ENCODE measurements at regions of chr16 and their contacts with region 1.

Region 1: GRCh38 chr16:11742539-11743307 is at the start of gene TXNDC11:
- DNase-seq: peak; percentile 98 to 100 (median 100)
- ATAC-seq: peak; percentile 98
- H3K4me3 ChIP-seq: peak within 1 kb of the TSS; percentile 92
- H3K4me3 Mint-ChIP-seq: peak within 1 kb of the TSS; percentile 91 to 98 (median 94)
- H3K27ac ChIP-seq: peak within 1 kb of the TSS; percentile 90
- H3K27ac Mint-ChIP-seq: peak within 1 kb of the TSS; percentile 91 to 99 (median 98)
- H3K4me1 ChIP-seq: peaks cover 26 to 28% of the 10 kb centered on the region in 2 donors
- H3K4me1 Mint-ChIP-seq: peaks cover 39 to 55% (median 51%) of the 10 kb centered on the region in 7 donors
- H3K27me3 ChIP-seq: no peaks in the 10 kb centered on the region
- H3K27me3 Mint-ChIP-seq: no peaks in the 10 kb centered on the region
- total RNA-seq, gene TXNDC11: 41.2 to 80.5 (median 55.1) TPM

Region 2: GRCh38 chr16:11560701-11561449 is 181.8 kb before region 1 on chr16:
- CTCF ChIA-PET with region 1: no interaction called
- POLR2A ChIA-PET with region 1: interaction called, 3 read pairs
- intact Hi-C with region 1: loop called in 1 of 2 experiments (anchors 1 kb)
- DNase-seq: peak; percentile 41 to 92 (median 89)
- ATAC-seq: peak; percentile 92
- H3K4me3 ChIP-seq: peak overlapping the region; percentile 56
- H3K4me3 Mint-ChIP-seq: peak overlapping the region; percentile 79 to 97 (median 84)
- H3K27ac ChIP-seq: peak overlapping the region; percentile 89
- H3K27ac Mint-ChIP-seq: peak overlapping the region; percentile 92 to 99 (median 99)
- H3K4me1 ChIP-seq: peaks cover 70 to 85% of the 10 kb centered on the region in 2 donors
- H3K4me1 Mint-ChIP-seq: peaks cover 43 to 92% (median 78%) of the 10 kb centered on the region in 7 donors
- H3K27me3 ChIP-seq: no peaks in the 10 kb centered on the region
- H3K27me3 Mint-ChIP-seq: peaks cover 0 to 2% (median 0%) of the 10 kb centered on the region in 5 donors

Region 3: GRCh38 chr16:11783319-11784037 is 40.8 kb after region 1 on chr16:
- CTCF ChIA-PET with region 1: interaction called, 3 read pairs
- POLR2A ChIA-PET with region 1: interaction called, 40 read pairs
- intact Hi-C with region 1: loop called (anchors 1 kb)
- DNase-seq: peak; percentile 31 to 89 (median 82)
- ATAC-seq: peak; percentile 90
- H3K4me3 ChIP-seq: peak overlapping the region; percentile 52
- H3K4me3 Mint-ChIP-seq: peak overlapping the region; percentile 79 to 92 (median 85)
- H3K27ac ChIP-seq: peak overlapping the region; percentile 96
- H3K27ac Mint-ChIP-seq: peak overlapping the region; percentile 95 to 99 (median 99)
- H3K4me1 ChIP-seq: peaks cover 33 to 49% of the 10 kb centered on the region in 2 donors
- H3K4me1 Mint-ChIP-seq: peaks cover 41 to 68% (median 62%) of the 10 kb centered on the region in 7 donors
- H3K27me3 ChIP-seq: no peaks in the 10 kb centered on the region
- H3K27me3 Mint-ChIP-seq: no peaks in the 10 kb centered on the region

Region 4: GRCh38 chr16:11851294-11852091 is 108.8 kb after region 1 on chr16 and contains the start of gene RSL1D1:
- CTCF ChIA-PET with region 1: no interaction called
- POLR2A ChIA-PET with region 1: interaction called, 6 read pairs
- intact Hi-C with region 1: loop called (anchors 1 kb)
- DNase-seq: peak; percentile 90 to 99 (median 96)
- ATAC-seq: peak; percentile 92
- H3K4me3 ChIP-seq: peak within 1 kb of the TSS; percentile 95
- H3K4me3 Mint-ChIP-seq: peak within 1 kb of the TSS; percentile 94 to 99 (median 99)
- H3K27ac ChIP-seq: peak within 1 kb of the TSS; percentile 89
- H3K27ac Mint-ChIP-seq: peak within 1 kb of the TSS; percentile 91 to 98 (median 97)
- H3K4me1 ChIP-seq: peaks cover 29% of the 10 kb centered on the region in 2 donors
- H3K4me1 Mint-ChIP-seq: peaks cover 32 to 72% (median 63%) of the 10 kb centered on the region in 7 donors
- H3K27me3 ChIP-seq: no peaks in the 10 kb centered on the region
- H3K27me3 Mint-ChIP-seq: no peaks in the 10 kb centered on the region
- total RNA-seq, gene RSL1D1: 141 to 255 (median 219) TPM

Region 5: DNA sequence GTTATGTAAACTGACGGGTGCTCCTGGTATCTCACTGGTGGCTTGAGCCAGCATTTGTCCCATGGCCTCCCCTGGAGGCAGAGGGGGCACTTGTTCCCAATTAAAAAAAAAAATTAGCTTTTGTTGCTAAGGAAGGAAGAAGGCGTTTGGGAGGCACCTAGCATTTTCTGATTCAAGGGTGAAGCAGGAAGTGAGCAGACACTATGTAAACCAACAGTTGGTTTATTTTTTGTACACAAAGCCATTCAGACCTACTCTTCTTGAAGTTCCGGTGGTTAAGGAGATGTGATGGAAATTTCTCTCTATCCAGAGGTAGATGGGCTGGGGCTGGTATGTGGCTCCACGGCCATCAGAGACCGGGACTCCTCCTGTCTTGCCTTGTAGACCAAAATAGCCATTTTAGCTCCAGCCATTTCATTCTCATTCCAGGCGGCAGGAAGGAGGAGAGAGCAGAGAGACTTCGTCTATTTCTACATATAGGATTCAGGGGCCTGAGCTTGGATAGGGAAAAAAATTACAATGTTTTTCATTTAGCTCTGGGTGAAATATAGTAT is 336.8 kb after region 1 on chr16:
- CTCF ChIA-PET with region 1: no interaction called
- POLR2A ChIA-PET with region 1: interaction called, 3 read pairs
- intact Hi-C with region 1: loop called (anchors 5 kb)
- DNase-seq: peak in 5 of 9 donors; percentile 42 to 61 (median 52)
- ATAC-seq: peak; percentile 34
- H3K4me3 ChIP-seq: peak overlapping the region; percentile 24
- H3K4me3 Mint-ChIP-seq: peak overlapping the region; percentile 54 to 94 (median 78)
- H3K27ac ChIP-seq: peak overlapping the region; percentile 84
- H3K27ac Mint-ChIP-seq: peak overlapping the region; percentile 88 to 97 (median 96)
- H3K4me1 ChIP-seq: peaks cover 40 to 66% of the 10 kb centered on the region in 2 donors
- H3K4me1 Mint-ChIP-seq: peaks cover 34 to 93% (median 77%) of the 10 kb centered on the region in 7 donors
- H3K27me3 ChIP-seq: no peaks in the 10 kb centered on the region
- H3K27me3 Mint-ChIP-seq: no peaks in the 10 kb centered on the region